Tibial artery (tissue), 4 donors: ENCODE measurements at regions of chrX and their contacts with region 1.

Region 1: DNA sequence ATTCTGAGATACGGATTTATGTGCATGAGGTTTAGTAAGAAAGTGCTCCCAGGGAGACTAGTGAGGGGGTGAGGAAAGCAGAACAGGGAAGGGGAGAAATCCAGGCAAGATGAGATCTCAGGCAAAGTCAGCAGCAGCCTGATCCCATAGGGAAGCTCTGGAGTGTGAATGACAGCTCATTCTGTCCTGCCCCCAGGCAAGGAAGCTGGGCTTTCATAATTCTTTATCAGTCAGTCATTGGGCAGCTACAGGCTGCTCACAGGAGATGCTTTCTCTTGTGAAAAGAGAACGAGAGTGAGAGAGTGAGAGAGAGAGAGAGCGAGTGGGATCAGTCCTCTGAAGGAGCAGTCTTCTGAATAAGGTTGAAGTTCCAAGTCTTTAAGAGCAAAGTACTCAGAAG is 48.1 kb downstream of the SRPX start:
- DNase-seq: no peak
- H3K4me3 ChIP-seq: no peak overlapping the region
- H3K27ac ChIP-seq: no peak overlapping the region
- H3K4me1 ChIP-seq: no peaks in the 10 kb centered on the region
- H3K27me3 ChIP-seq: no peaks in the 10 kb centered on the region
- CTCF ChIP-seq: no peak

Region 2: DNA sequence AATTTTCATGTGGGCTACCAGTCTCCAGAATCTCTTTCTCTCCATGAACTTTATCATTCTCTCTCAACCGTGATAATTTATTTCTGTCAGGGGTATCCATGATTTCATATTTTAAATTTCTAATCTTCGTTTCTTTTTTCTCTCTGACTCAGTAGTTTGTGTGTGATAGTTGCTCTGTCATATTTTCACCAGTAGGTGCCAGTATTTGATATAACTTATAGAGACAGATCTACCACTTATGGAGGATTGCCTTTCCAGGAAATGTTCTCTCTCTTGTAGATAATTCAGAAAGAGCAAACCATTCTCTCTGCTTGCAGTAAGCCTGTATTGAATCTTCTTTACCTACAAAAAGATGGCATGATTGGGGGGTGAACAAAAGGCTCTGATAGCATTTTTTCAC is 245.9 kb before region 1 on chrX:
- intact Hi-C with region 1: loop called (anchors 5 kb)
- DNase-seq: no peak
- H3K4me3 ChIP-seq: no peak overlapping the region
- H3K27ac ChIP-seq: no peak overlapping the region
- H3K4me1 ChIP-seq: no peaks in the 10 kb centered on the region
- H3K27me3 ChIP-seq: no peaks in the 10 kb centered on the region
- CTCF ChIP-seq: peak; percentile 42 to 59